Endothelial cell of umbilical vein (primary cell): ENCODE measurements at regions of chr12 and their contacts with region 1.

Region 1: DNA sequence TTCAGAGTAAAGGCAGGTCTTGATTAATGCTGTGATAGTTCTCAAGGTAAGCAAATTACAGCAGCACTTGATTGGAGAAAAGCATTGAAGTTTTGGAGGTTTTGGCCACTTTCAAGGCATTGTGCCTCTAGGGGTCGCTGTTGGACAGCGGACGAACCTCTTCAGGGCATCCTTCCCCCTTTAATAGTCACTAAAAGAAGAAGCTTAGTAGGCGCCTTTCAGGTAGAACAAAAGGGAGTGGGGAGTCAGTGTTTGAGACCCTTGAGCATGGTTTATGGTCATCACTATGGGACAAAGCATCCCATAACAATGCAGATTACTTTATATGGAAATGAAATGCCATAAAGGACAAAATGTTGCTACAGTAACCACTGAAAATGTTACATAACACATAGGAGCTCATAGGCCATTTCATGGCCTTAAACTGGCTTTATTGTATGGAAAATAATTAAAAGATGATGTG is 199.5 kb upstream of the DCN start:
- DNase-seq: peak; percentile 91
- H3K4me3 ChIP-seq: peak overlapping the region; percentile 17 to 66 (median 34)
- H3K27ac ChIP-seq: peak overlapping the region; percentile 54
- H3K4me1 ChIP-seq: peaks cover 8% of the 10 kb centered on the region
- H3K27me3 ChIP-seq: no peaks in the 10 kb centered on the region
- CTCF ChIP-seq: peak; percentile 80 to 83
- POLR2A ChIP-seq: no peak

Region 2: GRCh38 chr12:91355150-91356006 is 26.7 kb before region 1 on chr12:
- CTCF ChIA-PET with region 1: interaction called, 18 read pairs
- POLR2A ChIA-PET with region 1: no interaction called
- dilution Hi-C with region 1: no loop called
- intact Hi-C with region 1: no loop called
- DNase-seq: peak; percentile 75
- H3K4me3 ChIP-seq: no peak overlapping the region
- H3K27ac ChIP-seq: no peak overlapping the region
- H3K4me1 ChIP-seq: peaks cover 4% of the 10 kb centered on the region
- H3K27me3 ChIP-seq: no peaks in the 10 kb centered on the region
- CTCF ChIP-seq: peak; percentile 83 to 87
- POLR2A ChIP-seq: no peak

Region 3: DNA sequence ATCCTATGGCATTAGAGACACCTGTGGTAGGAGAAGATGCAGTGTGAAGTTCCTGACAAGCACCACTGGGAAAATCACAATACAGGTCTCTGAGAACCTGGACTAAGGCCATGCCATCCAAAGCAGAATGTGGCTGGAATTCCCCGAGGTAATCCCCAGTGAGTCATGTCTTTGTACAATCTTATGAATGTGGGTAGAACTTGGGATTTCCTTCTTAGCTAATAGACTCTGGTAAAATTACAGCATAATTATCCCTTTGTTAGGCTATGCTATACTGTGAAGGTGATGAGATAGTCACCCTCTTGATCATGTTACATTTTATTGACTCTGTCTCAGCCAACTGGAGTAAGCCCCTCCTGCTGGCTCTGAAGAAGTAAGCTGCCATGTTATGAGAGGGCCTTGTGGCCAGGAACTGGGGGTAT is 24.8 kb after region 1 on chr12:
- CTCF ChIA-PET with region 1: interaction called, 20 read pairs
- POLR2A ChIA-PET with region 1: no interaction called
- dilution Hi-C with region 1: no loop called
- intact Hi-C with region 1: no loop called
- DNase-seq: peak; percentile 67
- H3K4me3 ChIP-seq: no peak overlapping the region
- H3K27ac ChIP-seq: no peak overlapping the region
- H3K4me1 ChIP-seq: no peaks in the 10 kb centered on the region
- H3K27me3 ChIP-seq: no peaks in the 10 kb centered on the region
- CTCF ChIP-seq: no peak
- POLR2A ChIP-seq: no peak

Region 4: GRCh38 chr12:91811481-91812287 is 429.6 kb after region 1 on chr12:
- CTCF ChIA-PET with region 1: interaction called, 52 read pairs
- POLR2A ChIA-PET with region 1: no interaction called
- dilution Hi-C with region 1: no loop called
- intact Hi-C with region 1: loop called (anchors 1 kb)
- DNase-seq: peak; percentile 79
- H3K4me3 ChIP-seq: no peak overlapping the region
- H3K27ac ChIP-seq: no peak overlapping the region
- H3K4me1 ChIP-seq: no peaks in the 10 kb centered on the region
- H3K27me3 ChIP-seq: no peaks in the 10 kb centered on the region
- CTCF ChIP-seq: peak; percentile 60 to 72
- POLR2A ChIP-seq: no peak

Region 5: GRCh38 chr12:92145731-92146496 is 763.8 kb after region 1 on chr12 and contains the start of gene BTG1:
- CTCF ChIA-PET with region 1: interaction called, 154 read pairs
- POLR2A ChIA-PET with region 1: interaction called, 69 read pairs
- dilution Hi-C with region 1: no loop called
- intact Hi-C with region 1: loop called (anchors 1 kb)
- DNase-seq: peak; percentile 100
- H3K4me3 ChIP-seq: peak within 1 kb of the TSS; percentile 53 to 86 (median 85)
- H3K27ac ChIP-seq: peak within 1 kb of the TSS; percentile 80
- H3K4me1 ChIP-seq: peaks cover 19% of the 10 kb centered on the region
- H3K27me3 ChIP-seq: no peaks in the 10 kb centered on the region
- CTCF ChIP-seq: peak in 1 of 2 donors; percentile 1
- POLR2A ChIP-seq: peak; percentile 100
- total RNA-seq, gene BTG1: 89.5 and 104 TPM in 2 replicates

Region 6: GRCh38 chr12:92408072-92408900 is 1026.2 kb after region 1 on chr12:
- CTCF ChIA-PET with region 1: interaction called, 35 read pairs
- POLR2A ChIA-PET with region 1: interaction called, 3 read pairs
- dilution Hi-C with region 1: no loop called
- intact Hi-C with region 1: loop called (anchors 1 kb)
- DNase-seq: peak; percentile 50
- H3K4me3 ChIP-seq: no peak overlapping the region
- H3K27ac ChIP-seq: no peak overlapping the region
- H3K4me1 ChIP-seq: peaks cover 16% of the 10 kb centered on the region
- H3K27me3 ChIP-seq: peaks cover 4 to 5% of the 10 kb centered on the region in 2 experiments
- CTCF ChIP-seq: peak; percentile 28 to 45
- POLR2A ChIP-seq: no peak

Region 7: GRCh38 chr12:92608151-92609091 is 1226.3 kb after region 1 on chr12:
- CTCF ChIA-PET with region 1: interaction called, 60 read pairs
- POLR2A ChIA-PET with region 1: no interaction called
- dilution Hi-C with region 1: no loop called
- intact Hi-C with region 1: loop called (anchors 1 kb)
- DNase-seq: peak; percentile 62
- H3K4me3 ChIP-seq: no peak overlapping the region
- H3K27ac ChIP-seq: no peak overlapping the region
- H3K4me1 ChIP-seq: peaks cover 4% of the 10 kb centered on the region
- H3K27me3 ChIP-seq: no peaks in the 10 kb centered on the region
- CTCF ChIP-seq: peak; percentile 34 to 38
- POLR2A ChIP-seq: no peak